ENCODE measurements at regions of chr1 and their contacts with region 1.

Region 1: GRCh38 chr1:159936273-159936904 is 9.0 kb downstream of the IGSF9 start:
- DNase-seq: peak; percentile 85 to 92
- H3K4me3 ChIP-seq: no peak overlapping the region
- H3K4me3 Mint-ChIP-seq: no peak overlapping the region
- H3K27ac Mint-ChIP-seq: no peak overlapping the region
- H3K4me1 ChIP-seq: peaks cover 65% of the 10 kb centered on the region
- H3K4me1 Mint-ChIP-seq: peaks cover 54% of the 10 kb centered on the region
- H3K27me3 ChIP-seq: no peaks in the 10 kb centered on the region
- H3K27me3 Mint-ChIP-seq: no peaks in the 10 kb centered on the region
- CTCF ChIP-seq: peak; percentile 96 to 99

Region 2: GRCh38 chr1:159798893-159799292 is 137.5 kb before region 1 on chr1:
- CTCF ChIA-PET with region 1: no interaction called
- POLR2A ChIA-PET with region 1: no interaction called
- intact Hi-C with region 1: loop called (anchors 1 kb)
- DNase-seq: peak; percentile 78 to 79
- H3K4me3 ChIP-seq: no peak overlapping the region
- H3K4me3 Mint-ChIP-seq: no peak overlapping the region
- H3K27ac Mint-ChIP-seq: no peak overlapping the region
- H3K4me1 ChIP-seq: no peaks in the 10 kb centered on the region
- H3K4me1 Mint-ChIP-seq: no peaks in the 10 kb centered on the region
- H3K27me3 ChIP-seq: no peaks in the 10 kb centered on the region
- H3K27me3 Mint-ChIP-seq: peaks cover 14% of the 10 kb centered on the region
- CTCF ChIP-seq: peak; percentile 69 to 84

Region 3: DNA sequence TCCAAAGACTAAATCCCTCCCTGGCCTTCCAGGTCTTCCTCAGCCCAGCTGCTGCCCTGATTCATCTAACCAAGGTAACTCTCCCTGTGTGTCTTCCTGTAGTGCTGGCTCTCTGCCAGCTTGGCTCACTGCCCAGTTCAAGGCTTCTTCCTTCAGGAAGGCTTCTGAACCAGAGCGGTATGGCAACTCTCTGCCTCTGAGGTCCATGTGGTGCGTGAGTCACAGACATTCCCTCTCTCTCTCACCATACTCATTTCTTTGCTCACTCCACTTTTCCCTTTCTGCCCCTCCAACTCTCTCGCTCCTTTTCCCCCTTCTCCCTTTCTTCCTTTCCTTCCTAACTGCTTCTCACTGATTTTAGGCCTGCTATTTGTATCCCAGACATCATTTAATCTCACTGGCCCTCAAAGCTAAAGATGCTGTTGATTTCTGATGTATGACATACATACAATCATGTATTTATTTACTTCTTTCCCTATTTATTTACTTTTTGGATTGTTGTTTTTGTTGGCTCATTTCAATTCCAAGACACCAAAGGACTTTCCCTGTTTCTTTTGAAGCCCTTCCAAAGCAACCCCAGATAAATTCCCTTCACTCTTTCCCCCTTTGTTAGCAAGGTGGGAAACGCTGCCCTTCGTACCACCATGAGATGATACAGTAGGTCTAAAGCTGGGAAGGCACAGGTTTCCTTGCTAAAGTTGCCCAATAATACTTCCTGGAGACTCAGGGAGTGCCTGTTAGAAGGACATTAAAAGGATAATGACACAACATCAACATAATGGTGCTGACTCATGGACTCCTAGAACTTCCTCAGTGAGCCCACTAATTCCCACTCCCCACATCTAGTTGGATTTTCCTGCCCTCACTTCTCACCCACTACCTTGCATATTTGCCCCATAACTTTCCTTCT is 54.2 kb before region 1 on chr1:
- CTCF ChIA-PET with region 1: no interaction called
- POLR2A ChIA-PET with region 1: no interaction called
- intact Hi-C with region 1: no loop called
- DNase-seq: no peak
- H3K4me3 ChIP-seq: no peak overlapping the region
- H3K4me3 Mint-ChIP-seq: no peak overlapping the region
- H3K27ac Mint-ChIP-seq: no peak overlapping the region
- H3K4me1 ChIP-seq: no peaks in the 10 kb centered on the region
- H3K4me1 Mint-ChIP-seq: no peaks in the 10 kb centered on the region
- H3K27me3 ChIP-seq: no peaks in the 10 kb centered on the region
- H3K27me3 Mint-ChIP-seq: no peaks in the 10 kb centered on the region
- CTCF ChIP-seq: no peak

Region 4: GRCh38 chr1:159908031-159908940 is 28.1 kb before region 1 on chr1:
- CTCF ChIA-PET with region 1: no interaction called
- POLR2A ChIA-PET with region 1: no interaction called
- intact Hi-C with region 1: loop called (anchors 1 kb)
- DNase-seq: no peak
- H3K4me3 ChIP-seq: no peak overlapping the region
- H3K4me3 Mint-ChIP-seq: peak overlapping the region; percentile 59
- H3K27ac Mint-ChIP-seq: peak overlapping the region; percentile 37
- H3K4me1 ChIP-seq: peaks cover 83% of the 10 kb centered on the region
- H3K4me1 Mint-ChIP-seq: peaks cover 53% of the 10 kb centered on the region
- H3K27me3 ChIP-seq: no peaks in the 10 kb centered on the region
- H3K27me3 Mint-ChIP-seq: no peaks in the 10 kb centered on the region
- CTCF ChIP-seq: no peak

Region 5: DNA sequence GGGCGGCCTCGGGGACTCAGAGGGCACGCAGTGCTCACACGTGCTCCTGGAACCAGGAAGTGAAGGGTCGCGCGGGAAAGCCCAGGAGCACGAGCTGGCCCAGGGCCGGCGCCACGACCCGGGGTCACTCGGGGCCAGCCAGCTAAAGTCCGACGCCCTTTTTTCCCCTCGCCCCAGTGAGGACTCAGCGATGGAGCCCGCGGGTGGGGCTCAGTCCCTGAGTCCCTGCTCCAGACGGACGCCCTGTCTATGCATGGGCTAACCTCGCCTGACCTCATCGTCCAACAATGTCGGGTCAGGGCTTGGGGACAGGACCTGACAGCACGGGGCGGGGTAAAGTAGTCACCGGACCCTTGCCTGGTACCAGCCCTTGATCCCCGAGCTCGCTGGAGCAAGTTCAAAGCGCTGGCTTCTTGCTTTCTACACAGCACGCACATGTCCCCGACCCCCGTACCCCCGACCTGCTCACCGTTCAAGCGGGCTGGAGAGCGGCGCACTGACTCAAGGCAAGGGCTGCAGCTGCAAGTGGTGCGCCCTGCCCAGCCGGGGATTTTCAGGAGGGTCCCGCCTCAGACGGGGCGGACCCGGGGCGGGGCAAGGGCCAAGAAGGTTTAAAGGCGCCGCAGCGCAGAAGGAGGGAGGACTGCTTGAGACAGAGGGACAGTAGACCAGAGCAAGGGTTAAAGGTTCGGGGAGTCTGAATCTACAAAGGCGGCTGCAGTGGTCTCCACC is 11.2 kb before region 1 on chr1 and contains the start of gene TAGLN2:
- CTCF ChIA-PET with region 1: interaction called, 4 read pairs
- POLR2A ChIA-PET with region 1: interaction called, 3 read pairs
- intact Hi-C with region 1: loop called (anchors 1 kb)
- DNase-seq: peak; percentile 91 to 92
- H3K4me3 ChIP-seq: peak within 1 kb of the TSS; percentile 63
- H3K4me3 Mint-ChIP-seq: peak within 1 kb of the TSS; percentile 74
- H3K27ac Mint-ChIP-seq: peak within 1 kb of the TSS; percentile 98
- H3K4me1 ChIP-seq: peaks cover 42% of the 10 kb centered on the region
- H3K4me1 Mint-ChIP-seq: peaks cover 43% of the 10 kb centered on the region
- H3K27me3 ChIP-seq: no peaks in the 10 kb centered on the region
- H3K27me3 Mint-ChIP-seq: no peaks in the 10 kb centered on the region
- CTCF ChIP-seq: no peak
- total RNA-seq, gene TAGLN2: 518 and 531 TPM in 2 replicates

Region 6: GRCh38 chr1:159959451-159959850 is 23.1 kb after region 1 on chr1:
- CTCF ChIA-PET with region 1: interaction called, 3 read pairs
- POLR2A ChIA-PET with region 1: interaction called, 3 read pairs
- intact Hi-C with region 1: loop called (anchors 2 kb)
- DNase-seq: peak; percentile 79 to 81
- H3K4me3 ChIP-seq: no peak overlapping the region
- H3K4me3 Mint-ChIP-seq: peak overlapping the region; percentile 27
- H3K27ac Mint-ChIP-seq: peak overlapping the region; percentile 93
- H3K4me1 ChIP-seq: peaks cover 41% of the 10 kb centered on the region
- H3K4me1 Mint-ChIP-seq: peaks cover 36% of the 10 kb centered on the region
- H3K27me3 ChIP-seq: no peaks in the 10 kb centered on the region
- H3K27me3 Mint-ChIP-seq: no peaks in the 10 kb centered on the region
- CTCF ChIP-seq: no peak

Region 7: DNA sequence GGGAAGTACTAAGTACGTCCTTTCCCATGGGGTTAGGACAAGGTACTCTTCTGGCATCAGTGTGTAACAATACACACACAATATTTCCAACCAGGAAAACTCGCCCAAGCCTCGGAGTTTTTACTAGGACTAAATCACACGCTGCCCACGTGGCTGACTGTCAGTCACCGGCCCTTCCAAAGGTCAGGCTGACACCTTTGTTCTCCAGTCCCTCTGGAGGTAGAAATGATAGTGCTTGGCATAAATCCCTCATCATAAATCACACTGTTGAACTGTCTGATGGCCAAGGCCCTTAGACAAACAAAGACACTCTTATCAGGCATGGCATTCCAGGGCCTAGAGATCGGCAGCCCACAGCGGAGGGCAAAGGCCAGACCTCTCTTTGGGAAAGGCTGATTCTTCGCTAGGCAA is 34.5 kb after region 1 on chr1:
- CTCF ChIA-PET with region 1: no interaction called
- POLR2A ChIA-PET with region 1: no interaction called
- intact Hi-C with region 1: loop called (anchors 1 kb)
- DNase-seq: peak; percentile 92 to 95
- H3K4me3 ChIP-seq: no peak overlapping the region
- H3K4me3 Mint-ChIP-seq: peak overlapping the region; percentile 12
- H3K27ac Mint-ChIP-seq: peak overlapping the region; percentile 83
- H3K4me1 ChIP-seq: peaks cover 44% of the 10 kb centered on the region
- H3K4me1 Mint-ChIP-seq: peaks cover 20% of the 10 kb centered on the region
- H3K27me3 ChIP-seq: no peaks in the 10 kb centered on the region
- H3K27me3 Mint-ChIP-seq: no peaks in the 10 kb centered on the region
- CTCF ChIP-seq: peak; percentile 9 to 29

Region 8: DNA sequence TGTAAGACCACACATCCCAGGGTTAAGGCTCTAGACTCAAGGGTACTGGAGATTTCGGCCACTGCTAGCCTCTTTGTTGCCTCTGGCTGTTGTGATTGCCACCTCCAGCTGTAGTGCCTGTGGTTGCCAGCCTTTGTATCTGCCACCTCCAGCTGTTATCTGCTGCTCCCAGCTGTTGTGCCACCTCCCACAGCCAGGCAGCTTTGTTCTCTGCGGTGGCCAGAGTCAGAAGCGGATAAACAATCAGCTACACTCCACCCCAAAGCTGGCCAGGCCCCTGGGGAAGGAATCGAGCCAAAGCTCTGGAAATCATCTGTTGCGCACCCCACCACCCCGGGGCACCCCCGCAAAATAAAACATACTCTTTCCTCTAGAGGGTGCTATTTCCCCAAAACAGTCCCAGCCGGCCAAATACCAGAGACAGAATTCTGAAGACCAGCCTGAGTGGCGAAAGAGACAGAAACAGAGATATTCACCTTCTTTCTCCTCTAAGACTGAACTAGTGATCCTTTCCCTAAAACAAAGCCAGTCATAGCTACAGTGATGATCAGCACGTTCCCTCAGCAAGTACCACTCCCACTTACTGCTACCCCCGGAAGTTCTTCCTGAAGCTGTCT is 110.2 kb after region 1 on chr1:
- CTCF ChIA-PET with region 1: no interaction called
- POLR2A ChIA-PET with region 1: no interaction called
- intact Hi-C with region 1: no loop called
- DNase-seq: peak in 1 of 2 experiments; percentile 52
- H3K4me3 ChIP-seq: no peak overlapping the region
- H3K4me3 Mint-ChIP-seq: no peak overlapping the region
- H3K27ac Mint-ChIP-seq: no peak overlapping the region
- H3K4me1 ChIP-seq: no peaks in the 10 kb centered on the region
- H3K4me1 Mint-ChIP-seq: peaks cover 18% of the 10 kb centered on the region
- H3K27me3 ChIP-seq: no peaks in the 10 kb centered on the region
- H3K27me3 Mint-ChIP-seq: peaks cover 16% of the 10 kb centered on the region
- CTCF ChIP-seq: peak; percentile 57 to 62

Region 9: GRCh38 chr1:160085686-160086455 is 149.5 kb after region 1 on chr1:
- CTCF ChIA-PET with region 1: no interaction called
- POLR2A ChIA-PET with region 1: no interaction called
- intact Hi-C with region 1: loop called (anchors 10 kb)
- DNase-seq: peak; percentile 72 to 82
- H3K4me3 ChIP-seq: no peak overlapping the region
- H3K4me3 Mint-ChIP-seq: no peak overlapping the region
- H3K27ac Mint-ChIP-seq: no peak overlapping the region
- H3K4me1 ChIP-seq: no peaks in the 10 kb centered on the region
- H3K4me1 Mint-ChIP-seq: peaks cover 7% of the 10 kb centered on the region
- H3K27me3 ChIP-seq: no peaks in the 10 kb centered on the region
- H3K27me3 Mint-ChIP-seq: peaks cover 8% of the 10 kb centered on the region
- CTCF ChIP-seq: peak; percentile 82 to 87

Region 10: DNA sequence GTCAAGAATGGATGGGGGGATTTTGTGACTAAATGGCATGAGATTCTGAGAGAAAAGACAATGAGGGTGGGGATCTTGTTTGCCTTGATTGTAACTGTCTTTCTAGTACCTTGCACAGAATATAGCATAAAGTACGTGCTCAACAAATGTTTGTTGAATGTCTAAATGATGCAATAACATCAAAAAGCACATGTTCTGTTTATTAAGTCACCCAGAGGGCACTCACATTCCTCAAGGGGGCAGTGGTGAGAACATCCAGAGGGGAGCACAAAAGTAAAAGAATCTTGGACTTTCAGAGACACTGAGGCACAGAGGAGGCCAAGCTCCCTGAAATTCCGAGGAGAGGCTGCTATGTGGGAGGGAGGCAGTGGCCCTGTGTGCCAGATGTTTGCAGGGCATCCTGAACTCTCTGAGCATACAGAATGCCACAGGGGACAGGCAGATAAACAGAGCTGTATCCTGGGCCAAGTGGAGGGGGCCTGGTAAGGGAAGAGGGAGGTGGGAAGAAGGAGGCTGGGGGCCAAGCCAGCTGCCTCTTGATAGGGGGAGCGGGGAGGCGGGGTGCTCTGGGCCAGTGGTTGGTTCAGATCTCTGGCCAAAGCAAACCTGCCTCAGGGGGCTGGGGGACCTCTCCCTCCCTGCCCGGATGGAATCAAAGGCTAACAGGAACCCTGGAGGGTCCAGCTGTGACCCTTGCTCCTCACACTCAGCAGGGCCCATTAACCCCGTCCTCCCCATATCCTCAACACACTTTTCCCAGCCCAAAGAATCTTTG is 172.7 kb after region 1 on chr1:
- CTCF ChIA-PET with region 1: no interaction called
- POLR2A ChIA-PET with region 1: no interaction called
- intact Hi-C with region 1: no loop called
- DNase-seq: peak; percentile 53 to 58
- H3K4me3 ChIP-seq: no peak overlapping the region
- H3K4me3 Mint-ChIP-seq: no peak overlapping the region
- H3K27ac Mint-ChIP-seq: peak overlapping the region; percentile 38
- H3K4me1 ChIP-seq: peaks cover 12% of the 10 kb centered on the region
- H3K4me1 Mint-ChIP-seq: peaks cover 12% of the 10 kb centered on the region
- H3K27me3 ChIP-seq: no peaks in the 10 kb centered on the region
- H3K27me3 Mint-ChIP-seq: no peaks in the 10 kb centered on the region
- CTCF ChIP-seq: peak; percentile 28 to 54